ENCODE measurements at regions of chr20 and their contacts with region 1.

Region 1: DNA sequence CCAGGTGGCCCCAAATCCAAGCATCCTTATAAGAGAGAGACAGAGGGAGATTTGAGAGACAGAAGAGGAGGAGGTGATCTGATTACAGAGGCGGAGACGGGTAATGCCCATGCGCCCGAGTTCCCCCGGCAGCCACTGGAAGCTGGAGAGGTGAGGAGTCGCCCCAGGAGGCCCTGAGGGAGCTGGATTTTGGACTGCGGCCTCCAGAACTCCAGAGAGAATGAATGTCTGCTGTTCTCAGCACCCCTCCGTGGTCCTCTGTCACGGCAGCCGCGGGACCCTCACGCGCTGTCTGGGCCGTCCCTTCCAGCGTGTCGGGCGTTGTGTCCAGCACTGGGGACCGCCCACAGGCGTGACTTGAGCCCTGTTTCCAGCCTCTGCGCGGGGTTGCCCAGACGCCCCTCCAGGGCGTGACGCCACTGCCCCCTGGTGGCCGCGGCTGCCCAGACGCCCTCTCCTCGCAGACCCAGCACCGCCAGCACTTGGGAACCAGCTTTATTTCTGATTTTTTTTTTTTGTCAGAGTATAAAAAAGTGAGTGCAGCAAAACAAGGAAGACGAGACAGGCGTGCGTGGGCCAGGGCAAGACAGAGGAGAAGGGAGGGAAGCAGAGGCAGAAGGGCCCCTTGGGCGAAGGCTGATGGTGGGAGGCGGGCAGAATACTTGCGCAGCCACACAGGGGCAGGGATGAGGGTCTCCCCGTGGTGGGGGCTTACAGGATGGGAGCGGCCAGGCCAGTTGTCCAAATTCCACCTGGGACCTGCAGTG is 4.1 kb upstream of the ZNF512B start:
- DNase-seq: peak; percentile 83 to 89
- H3K4me3 ChIP-seq: no peak overlapping the region
- H3K27ac ChIP-seq: peak overlapping the region in 1 of 2 donors; percentile 19
- H3K4me1 ChIP-seq: peaks cover 0 to 9% of the 10 kb centered on the region in 2 donors
- H3K27me3 ChIP-seq: no peaks in the 10 kb centered on the region
- CTCF ChIP-seq: peak; percentile 99
- POLR2A ChIP-seq: peak in 1 of 2 donors; percentile 26

Region 2: DNA sequence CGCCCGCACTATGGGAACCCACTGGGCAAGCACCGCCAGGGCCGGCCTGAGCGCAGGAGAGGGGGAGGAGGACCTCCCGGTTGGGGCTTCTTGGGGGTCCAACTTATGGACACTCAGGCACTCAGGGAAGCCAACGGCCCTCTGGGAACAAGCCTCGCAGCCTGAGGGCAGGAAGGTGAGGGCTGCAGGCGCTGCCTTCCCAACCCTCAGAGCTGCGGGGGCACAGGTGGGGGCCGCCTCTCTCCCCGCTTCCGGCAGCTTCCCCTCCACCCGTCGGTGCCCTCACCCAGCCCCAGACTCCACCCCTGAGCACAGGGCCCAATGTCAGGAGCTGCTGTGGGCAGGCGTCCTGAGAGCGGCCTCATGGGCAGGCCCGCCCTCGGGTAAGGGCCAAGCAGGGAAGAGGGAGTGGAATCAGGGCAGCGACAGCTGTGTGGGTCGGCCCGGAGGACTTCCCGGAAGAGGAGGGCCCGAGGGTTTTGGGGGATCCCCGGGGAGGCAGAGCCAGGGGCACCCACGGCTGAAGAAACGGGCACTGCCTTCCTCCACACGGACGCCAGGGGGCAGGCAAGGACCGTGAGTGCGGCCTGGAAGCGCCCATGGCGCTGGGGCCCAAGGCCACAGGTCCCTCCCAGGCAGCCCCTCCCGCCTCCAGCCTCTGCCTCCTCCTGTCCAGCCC is 436.2 kb before region 1 on chr20:
- intact Hi-C with region 1: loop called (anchors 2 kb)
- DNase-seq: peak; percentile 64 to 79
- H3K4me3 ChIP-seq: no peak overlapping the region
- H3K27ac ChIP-seq: no peak overlapping the region
- H3K4me1 ChIP-seq: no peaks in the 10 kb centered on the region
- H3K27me3 ChIP-seq: peaks cover 11 to 12% of the 10 kb centered on the region in 2 donors
- CTCF ChIP-seq: peak; percentile 92 to 97 (median 94)
- POLR2A ChIP-seq: peak in 1 of 2 donors; percentile 18